ENCODE measurements at regions of chr5 and their contacts with region 1.

Region 1: GRCh38 chr5:146588326-146589027 is 72.5 kb upstream of the GPR151 start:
- DNase-seq: no peak
- H3K4me3 ChIP-seq: no peak overlapping the region
- H3K27ac ChIP-seq: no peak overlapping the region
- H3K4me1 ChIP-seq: no peaks in the 10 kb centered on the region
- H3K27me3 ChIP-seq: no peaks in the 10 kb centered on the region
- CTCF ChIP-seq: no peak
- EP300 ChIP-seq: no peak
- POLR2A ChIP-seq: no peak

Region 2: DNA sequence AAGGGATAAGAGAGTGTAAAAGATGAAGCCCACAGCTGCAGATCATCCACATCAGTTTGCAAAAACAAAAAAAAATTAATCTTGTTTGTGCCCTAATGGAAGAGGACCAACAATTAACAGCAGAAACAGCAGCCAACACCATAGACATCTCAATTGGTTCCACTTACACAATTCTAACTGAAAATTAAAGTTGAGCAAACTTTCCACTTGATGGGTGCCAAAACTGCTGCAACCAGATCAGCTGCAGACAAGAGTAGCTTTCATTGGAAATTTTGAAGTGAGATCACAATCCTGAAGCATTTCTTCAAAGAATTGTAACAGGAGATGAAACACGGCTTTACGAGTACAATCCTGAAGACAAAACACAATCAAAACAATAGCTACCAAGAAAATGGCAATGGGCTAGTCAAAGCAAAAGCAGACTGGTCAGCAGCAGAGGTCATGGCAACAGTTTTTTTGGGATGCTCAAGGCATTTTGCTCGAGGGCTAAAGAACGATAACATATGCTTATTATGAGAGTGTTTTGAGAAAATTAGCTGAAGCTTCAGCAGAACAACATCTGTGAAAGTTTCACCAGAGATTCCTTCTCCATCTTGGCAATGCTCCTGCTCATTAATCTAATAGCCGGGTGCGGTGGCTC is 389.2 kb before region 1 on chr5:
- intact Hi-C with region 1: no loop called
- DNase-seq: no peak
- H3K4me3 ChIP-seq: no peak overlapping the region
- H3K27ac ChIP-seq: no peak overlapping the region
- H3K4me1 ChIP-seq: no peaks in the 10 kb centered on the region
- H3K27me3 ChIP-seq: no peaks in the 10 kb centered on the region
- CTCF ChIP-seq: no peak
- EP300 ChIP-seq: no peak
- POLR2A ChIP-seq: no peak

Region 3: DNA sequence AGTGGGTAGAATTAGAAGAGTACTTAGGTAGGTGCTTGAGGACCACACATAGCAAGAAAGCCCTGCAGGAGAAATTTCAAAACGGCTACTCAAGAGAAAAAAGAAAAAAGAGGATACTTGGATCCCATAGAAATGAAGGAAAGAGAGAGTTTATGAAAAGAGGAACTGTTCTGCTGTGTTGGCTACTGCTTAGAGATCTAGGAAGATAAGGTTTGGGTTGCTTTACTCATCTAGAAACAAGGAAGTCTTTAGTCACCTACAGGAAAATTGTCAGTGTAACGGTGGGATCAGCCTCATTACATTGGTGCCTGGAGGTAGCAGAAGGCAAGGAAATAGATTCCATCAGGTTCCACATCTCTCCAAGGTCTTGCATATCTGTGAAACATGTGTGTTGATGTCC is 1332.7 kb after region 1 on chr5:
- intact Hi-C with region 1: loop called in 1 of 4 experiments (anchors 10 kb)
- DNase-seq: no peak
- H3K4me3 ChIP-seq: no peak overlapping the region
- H3K27ac ChIP-seq: no peak overlapping the region
- H3K4me1 ChIP-seq: no peaks in the 10 kb centered on the region
- H3K27me3 ChIP-seq: no peaks in the 10 kb centered on the region
- CTCF ChIP-seq: no peak
- EP300 ChIP-seq: no peak
- POLR2A ChIP-seq: no peak

Measured in ovary (tissue), 10 donors.